Breast epithelium (tissue), 4 donors: ENCODE measurements at regions of chr10 and their contacts with region 1.

Region 1: DNA sequence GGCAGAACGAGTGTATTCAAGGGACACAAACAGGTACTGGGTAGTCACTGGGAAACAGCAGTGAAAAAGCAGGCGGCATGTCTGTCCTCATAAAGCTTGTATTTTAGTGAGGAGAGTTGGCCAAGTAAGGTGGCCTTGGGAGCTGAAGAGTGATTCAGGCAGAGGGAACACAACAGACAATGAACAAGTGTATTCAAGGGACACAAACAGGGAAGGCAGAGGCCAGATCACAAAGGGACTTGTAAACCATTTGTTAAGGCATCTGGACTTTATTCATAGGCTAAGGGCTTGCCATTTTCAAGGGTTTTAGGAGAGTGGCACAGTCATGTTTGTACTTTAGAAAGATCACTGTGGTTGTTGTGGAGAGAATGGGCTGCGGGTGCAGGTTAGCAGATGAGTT is 49.0 kb downstream of the LRMDA start:
- DNase-seq: no peak
- H3K4me3 ChIP-seq: no peak overlapping the region
- H3K27ac ChIP-seq: no peak overlapping the region
- H3K4me1 ChIP-seq: no peaks in the 10 kb centered on the region
- H3K27me3 ChIP-seq: no peaks in the 10 kb centered on the region
- CTCF ChIP-seq: no peak
- POLR2A ChIP-seq: no peak

Region 2: DNA sequence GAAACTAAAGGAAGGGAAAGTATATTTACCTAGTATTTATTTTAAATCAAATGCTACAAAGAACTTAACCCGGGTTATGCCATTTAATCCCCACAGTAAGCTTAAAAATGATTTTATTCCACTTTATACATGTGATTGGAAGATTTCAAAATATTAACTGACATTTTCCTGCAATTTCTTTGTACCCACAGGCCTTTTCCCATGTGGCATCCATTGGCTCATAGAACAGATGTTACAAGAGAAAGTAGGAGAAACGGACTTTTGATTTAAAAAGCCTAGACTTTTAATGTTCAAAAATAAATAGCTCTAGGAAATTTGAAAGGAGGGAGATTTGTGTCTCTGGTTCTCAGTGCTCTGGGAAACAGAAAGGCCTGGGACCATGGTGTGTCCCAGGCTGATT is 1349.3 kb after region 1 on chr10:
- intact Hi-C with region 1: loop called (anchors 5 kb)
- DNase-seq: no peak
- H3K4me3 ChIP-seq: no peak overlapping the region
- H3K27ac ChIP-seq: no peak overlapping the region
- H3K4me1 ChIP-seq: no peaks in the 10 kb centered on the region
- H3K27me3 ChIP-seq: no peaks in the 10 kb centered on the region
- CTCF ChIP-seq: no peak
- POLR2A ChIP-seq: no peak

Region 3: DNA sequence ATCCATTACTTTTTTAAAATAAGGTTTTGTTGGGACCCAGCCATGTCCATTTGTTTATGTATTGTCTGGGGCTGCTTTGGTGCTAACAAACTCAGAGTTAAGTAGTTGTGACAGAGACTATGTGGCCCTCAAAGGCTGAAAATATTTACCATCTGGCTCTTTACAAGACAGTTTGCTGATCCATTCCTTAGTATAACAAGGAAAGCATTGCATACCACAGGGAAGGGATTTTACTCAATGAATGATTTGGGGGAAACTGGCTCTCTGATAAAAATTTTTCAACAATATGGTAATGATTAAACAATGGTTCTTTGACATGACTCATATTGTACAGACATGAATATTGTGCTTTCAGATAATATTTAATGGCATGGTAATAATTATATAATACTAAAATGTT is 1419.1 kb after region 1 on chr10:
- intact Hi-C with region 1: no loop called
- DNase-seq: no peak
- H3K4me3 ChIP-seq: no peak overlapping the region
- H3K27ac ChIP-seq: no peak overlapping the region
- H3K4me1 ChIP-seq: no peaks in the 10 kb centered on the region
- H3K27me3 ChIP-seq: no peaks in the 10 kb centered on the region
- CTCF ChIP-seq: no peak
- POLR2A ChIP-seq: no peak